Heart right ventricle (tissue), 16 donors: ENCODE measurements at regions of chr3 and their contacts with region 1.

Region 1: DNA sequence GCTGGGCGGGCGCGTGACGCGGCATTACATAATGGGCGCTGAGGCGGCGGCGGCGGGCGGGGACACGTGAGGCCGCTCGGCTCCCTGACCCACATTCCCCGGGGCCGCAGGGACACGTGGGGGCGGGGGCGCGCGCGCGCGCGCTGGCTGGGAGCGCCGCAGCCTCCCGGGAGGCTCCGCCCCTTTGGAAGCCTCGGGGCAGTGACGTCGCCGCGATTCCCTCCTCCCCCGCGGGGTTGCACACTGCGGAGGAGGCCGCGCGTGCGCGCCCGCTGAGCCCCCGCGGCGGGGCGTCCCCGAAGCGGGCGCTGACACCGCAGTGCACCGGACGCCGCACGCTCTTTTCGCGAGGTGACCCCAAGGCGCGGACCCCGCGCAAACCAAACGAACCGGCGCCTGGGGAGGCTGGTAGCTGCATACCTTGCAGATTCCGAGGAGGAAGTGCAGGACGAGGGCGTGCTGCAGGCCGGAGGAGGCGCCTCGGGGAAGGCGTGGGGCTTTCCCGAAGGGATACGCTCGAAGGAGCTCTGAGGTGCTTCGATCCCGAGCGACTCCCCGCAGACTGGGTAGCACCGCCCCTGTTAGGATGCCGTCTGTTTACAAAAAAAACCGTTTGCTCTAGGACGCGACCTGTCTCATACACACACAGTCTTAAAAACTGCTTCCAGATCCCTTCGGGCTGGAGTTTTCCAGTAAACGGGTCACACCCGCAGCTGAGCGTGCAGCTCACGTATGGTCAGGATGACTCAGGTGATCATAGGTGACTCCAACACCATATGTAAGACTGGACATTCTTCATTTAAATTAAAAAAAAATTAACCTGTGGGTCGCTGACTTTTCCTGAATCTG is 1.0 kb downstream of the NR1D2 start:
- DNase-seq: peak; percentile 97 to 99
- ATAC-seq: peak; percentile 91 to 97 (median 94)
- H3K4me3 ChIP-seq: peak overlapping the region; percentile 51 to 96 (median 79)
- H3K27ac ChIP-seq: peak overlapping the region; percentile 87 to 100 (median 98)
- H3K4me1 ChIP-seq: peaks cover 22 to 57% (median 54%) of the 10 kb centered on the region in 9 donors
- H3K27me3 ChIP-seq: no peaks in the 10 kb centered on the region
- CTCF ChIP-seq: no peak

Region 2: DNA sequence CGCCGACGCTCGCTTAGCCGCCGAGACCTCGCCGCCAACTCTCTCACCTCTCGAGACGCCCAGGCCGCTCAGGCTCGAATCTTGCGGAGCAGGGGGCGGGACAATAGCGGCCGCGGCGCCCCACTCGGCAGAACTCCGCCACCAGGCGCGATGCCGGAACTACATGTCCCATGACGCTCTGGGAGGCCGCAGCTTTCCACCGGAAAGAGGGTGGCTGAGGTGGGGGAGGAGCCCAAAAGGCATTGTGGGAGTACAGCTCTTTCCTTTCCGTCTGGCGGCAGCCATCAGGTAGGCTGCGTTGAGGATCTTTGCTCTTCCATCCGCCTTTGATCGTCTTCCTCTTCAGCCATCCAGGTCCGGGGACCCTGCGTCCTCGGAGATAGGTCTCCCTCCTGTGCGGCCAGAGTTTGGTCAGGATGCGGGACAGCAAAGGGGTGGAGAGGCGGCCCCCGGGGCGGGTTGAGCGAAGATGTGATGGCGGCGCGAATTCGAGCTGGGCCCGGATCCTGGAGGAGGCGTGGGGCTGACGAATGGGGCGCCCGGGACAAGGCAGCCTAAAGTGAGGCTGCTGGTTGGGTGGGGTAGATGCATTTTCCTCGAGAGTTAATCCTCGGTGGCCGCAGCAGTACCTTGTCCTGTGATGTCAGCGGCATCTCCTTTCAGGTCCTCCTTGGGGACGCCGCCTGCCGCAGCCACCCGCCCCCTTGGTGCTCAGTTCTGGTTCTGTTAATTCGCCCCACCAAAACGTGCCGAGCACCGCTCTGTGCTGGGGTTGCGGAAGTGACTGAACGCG is 29.0 kb before region 1 on chr3 and contains the starts of genes NKIRAS1 and RPL15:
- intact Hi-C with region 1: loop called in 6 of 10 experiments (anchors 1 to 2 kb)
- DNase-seq: peak; percentile 96 to 98
- ATAC-seq: peak; percentile 98 to 99 (median 99)
- H3K4me3 ChIP-seq: peak within 1 kb of the TSS; percentile 66 to 96 (median 84)
- H3K27ac ChIP-seq: peak within 1 kb of the TSS; percentile 75 to 97 (median 90)
- H3K4me1 ChIP-seq: peaks cover 2 to 45% (median 39%) of the 10 kb centered on the region in 9 donors
- H3K27me3 ChIP-seq: no peaks in the 10 kb centered on the region
- CTCF ChIP-seq: peak; percentile 27 to 66 (median 56)
- total RNA-seq, gene NKIRAS1: 15.2 to 24.2 (median 20.3) TPM
- total RNA-seq, gene RPL15: 869 to 1,215 (median 928) TPM